ENCODE measurements at regions of chr16 and their contacts with region 1.

Region 1: GRCh38 chr16:11639925-11640899 is 28.0 kb upstream of the SNN start:
- DNase-seq: peak; percentile 51 to 92 (median 76)

Region 2: DNA sequence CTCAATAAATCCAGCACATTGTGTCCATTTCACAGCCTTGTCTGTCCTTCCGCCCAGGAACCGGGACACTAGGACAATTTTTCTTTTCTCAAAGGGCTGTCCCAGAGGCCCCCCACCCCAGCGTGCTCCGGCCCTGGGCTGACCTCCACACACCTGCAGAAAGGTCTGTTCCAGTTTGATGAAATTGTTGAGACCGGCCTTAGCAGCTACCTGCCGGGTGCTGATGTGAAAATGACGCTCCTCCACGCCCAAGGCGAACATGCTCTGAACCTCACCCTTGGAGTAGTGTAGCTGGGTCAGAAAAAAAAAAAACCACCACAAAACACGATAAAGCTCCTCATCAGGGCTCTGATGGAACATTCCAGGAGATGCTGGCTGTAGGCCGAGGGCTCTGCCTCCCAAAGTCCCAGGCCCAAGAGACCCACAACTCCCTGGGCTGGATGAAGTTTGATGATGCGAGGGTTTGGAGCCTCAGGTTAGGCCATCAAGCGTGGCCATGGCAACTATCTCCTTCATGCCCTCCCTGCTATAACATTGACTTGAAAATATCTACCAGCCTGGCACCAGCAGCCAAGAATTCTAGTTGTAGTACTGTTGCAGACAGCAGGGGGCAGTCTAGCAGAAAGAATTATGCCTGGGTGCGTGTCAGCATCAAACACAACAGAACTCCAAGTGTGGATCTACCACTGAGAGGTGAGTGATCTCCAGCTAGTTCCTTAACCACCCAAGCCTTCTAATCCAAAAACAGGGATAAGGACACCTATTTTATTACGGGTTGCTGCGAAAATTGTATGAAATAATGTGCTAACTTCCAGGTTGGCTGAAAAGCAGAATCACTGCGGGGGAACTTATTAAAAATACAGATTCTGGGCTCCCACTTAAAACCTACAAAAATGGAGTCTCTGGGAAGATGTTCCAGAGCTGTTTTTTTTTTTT is 232.9 kb before region 1 on chr16:
- intact Hi-C with region 1: loop called (anchors 5 kb)
- DNase-seq: peak in 36 of 42 donors; percentile 23 to 83 (median 56)

Region 3: GRCh38 chr16:11535471-11535870 is 104.7 kb before region 1 on chr16:
- intact Hi-C with region 1: loop called (anchors 2 kb)
- DNase-seq: peak in 21 of 42 donors; percentile 17 to 72 (median 36)